Activated T-helper 1 cell treated with anti-CD3 and anti-CD28 coated beads, Interleukin-12 subunit alpha, Interleukin-12 subunit beta, Interleukin-2, Interleukin-4 antibody, amounts not matched to agents 30 ng/mL and 10 ng/mL and 1 ng/mL, durations not matched to agents 14 hours and 24 hours and 36 hours (primary cell): ENCODE measurements at regions of chr11 and their contacts with region 1.

Region 1: DNA sequence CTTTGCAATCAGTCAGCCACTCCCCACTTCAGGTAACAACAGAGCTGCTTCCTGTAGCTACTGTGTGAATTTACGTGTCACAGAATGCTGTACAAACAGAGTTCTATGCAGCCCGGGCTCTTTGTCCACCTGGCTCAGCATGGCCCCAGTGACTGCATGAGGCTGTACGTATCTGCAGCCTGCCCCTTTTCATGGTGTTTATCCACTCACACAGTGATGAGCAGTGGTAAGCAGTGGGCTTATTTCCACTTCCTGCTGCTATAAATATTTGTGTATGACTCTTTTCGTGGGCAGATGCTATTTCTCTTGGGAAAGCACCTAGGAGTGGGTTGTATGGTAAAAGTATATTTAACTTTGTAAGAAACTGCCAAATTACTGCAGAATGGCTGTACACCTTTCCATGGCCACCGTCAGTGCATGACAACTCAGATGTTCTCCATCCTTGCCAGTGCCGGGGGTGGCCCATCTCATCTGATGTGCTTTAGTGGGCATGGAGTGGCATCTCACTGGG is 43.3 kb downstream of the MYEOV start:
- DNase-seq: peak; percentile 26
- H3K4me3 Mint-ChIP-seq: peak overlapping the region; percentile 35
- H3K27ac Mint-ChIP-seq: peak overlapping the region; percentile 89
- H3K4me1 Mint-ChIP-seq: peaks cover 56% of the 10 kb centered on the region
- H3K27me3 Mint-ChIP-seq: peaks cover 4% of the 10 kb centered on the region

Region 2: GRCh38 chr11:69122642-69123431 is 214.4 kb before region 1 on chr11:
- intact Hi-C with region 1: loop called (anchors 1 kb)
- DNase-seq: peak; percentile 40
- H3K4me3 Mint-ChIP-seq: peak overlapping the region; percentile 59
- H3K27ac Mint-ChIP-seq: peak overlapping the region; percentile 5
- H3K4me1 Mint-ChIP-seq: peaks cover 36% of the 10 kb centered on the region
- H3K27me3 Mint-ChIP-seq: peaks cover 2% of the 10 kb centered on the region

Region 3: GRCh38 chr11:69296890-69297786 is 40.1 kb before region 1 on chr11:
- intact Hi-C with region 1: loop called (anchors 1 kb)
- DNase-seq: peak; percentile 77
- H3K4me3 Mint-ChIP-seq: peak overlapping the region; percentile 82
- H3K27ac Mint-ChIP-seq: peak overlapping the region; percentile 97
- H3K4me1 Mint-ChIP-seq: peaks cover 64% of the 10 kb centered on the region
- H3K27me3 Mint-ChIP-seq: peaks cover 6% of the 10 kb centered on the region

Region 4: GRCh38 chr11:69352715-69353325 is 15.6 kb after region 1 on chr11:
- intact Hi-C with region 1: loop called (anchors 1 kb)
- DNase-seq: no peak
- H3K4me3 Mint-ChIP-seq: no peak overlapping the region
- H3K27ac Mint-ChIP-seq: peak overlapping the region; percentile 43
- H3K4me1 Mint-ChIP-seq: peaks cover 10% of the 10 kb centered on the region
- H3K27me3 Mint-ChIP-seq: peaks cover 1% of the 10 kb centered on the region

Region 5: DNA sequence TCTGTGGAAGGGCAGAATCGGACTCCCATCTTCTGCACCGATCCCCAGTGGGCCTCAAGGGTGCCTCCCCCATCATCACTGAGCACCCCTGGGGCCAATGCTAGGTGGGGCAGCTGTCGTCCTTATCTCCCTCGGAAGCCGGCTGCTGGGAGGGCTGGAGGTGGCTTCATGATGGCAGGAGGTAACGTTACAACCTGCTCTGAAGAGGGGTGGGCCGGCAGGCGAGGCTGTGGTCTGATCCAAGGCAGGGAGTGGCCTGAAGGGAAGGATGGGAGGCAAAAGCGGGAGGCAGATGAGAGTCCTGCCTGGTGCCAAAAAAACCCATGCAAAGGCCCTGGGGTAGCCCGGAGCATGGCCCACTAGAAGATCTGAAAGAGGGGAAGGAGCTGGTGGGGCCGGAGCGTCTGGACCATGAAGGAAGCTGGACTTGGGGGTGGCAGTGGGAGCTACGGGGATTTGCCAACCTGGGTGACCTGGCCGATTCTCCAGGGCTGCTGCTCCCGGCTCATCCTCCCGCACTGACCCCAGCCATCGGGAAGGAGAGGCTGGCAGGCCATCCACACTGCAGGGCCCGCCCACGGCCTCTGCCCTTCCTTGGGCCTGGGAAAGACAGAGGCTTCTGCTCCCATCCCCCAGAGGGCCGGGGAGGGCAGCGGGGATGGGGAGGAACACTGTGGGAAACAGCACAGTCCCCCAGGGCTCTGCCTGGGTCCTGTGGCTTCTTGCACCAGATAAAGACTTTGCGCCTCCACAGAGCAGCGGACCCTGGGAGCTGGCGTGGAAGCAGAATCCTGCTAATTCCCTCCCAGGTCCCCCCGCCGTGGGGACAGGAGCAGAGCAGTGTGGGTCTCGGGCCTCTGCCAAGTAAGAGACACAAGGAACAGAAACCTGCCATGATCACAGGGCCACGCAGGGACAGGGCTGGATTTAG is 57.0 kb after region 1 on chr11:
- intact Hi-C with region 1: no loop called
- DNase-seq: no peak
- H3K4me3 Mint-ChIP-seq: no peak overlapping the region
- H3K27ac Mint-ChIP-seq: no peak overlapping the region
- H3K4me1 Mint-ChIP-seq: no peaks in the 10 kb centered on the region
- H3K27me3 Mint-ChIP-seq: no peaks in the 10 kb centered on the region

Region 6: DNA sequence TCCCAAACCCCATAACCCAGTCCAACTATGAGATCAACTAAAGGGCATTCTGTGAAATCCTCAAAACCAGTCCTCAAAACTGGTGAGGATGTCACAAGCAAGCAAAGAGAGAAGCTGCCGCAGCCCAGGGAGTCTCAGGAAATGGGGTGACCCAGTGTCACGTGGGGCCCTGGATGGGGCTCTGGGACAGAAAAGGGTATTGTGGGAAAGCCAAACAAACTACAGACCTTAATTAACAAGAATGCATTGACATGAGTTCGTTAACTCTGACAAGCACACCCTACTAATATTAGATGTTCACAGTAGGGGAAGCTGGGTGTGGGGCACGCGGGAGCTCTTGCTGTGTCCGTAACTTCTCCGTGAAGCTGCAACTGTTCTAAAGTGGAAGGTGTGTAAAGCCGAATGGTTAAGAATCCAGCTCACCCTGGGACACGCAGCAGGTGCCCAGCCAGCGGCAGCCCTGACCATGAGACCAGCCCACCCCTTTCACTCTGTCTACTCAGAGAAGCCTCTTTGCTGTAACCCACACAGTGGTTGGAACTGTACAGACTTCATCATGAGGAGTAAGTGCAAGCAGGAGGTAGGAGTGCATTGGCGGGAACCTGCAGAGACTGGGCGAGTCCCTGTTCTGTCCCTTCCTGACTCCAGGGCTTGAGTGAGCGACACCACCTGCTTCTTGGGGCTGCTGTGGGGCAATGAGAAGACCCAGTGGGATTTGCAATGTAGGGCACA is 162.1 kb after region 1 on chr11:
- intact Hi-C with region 1: no loop called
- DNase-seq: no peak
- H3K4me3 Mint-ChIP-seq: no peak overlapping the region
- H3K27ac Mint-ChIP-seq: no peak overlapping the region
- H3K4me1 Mint-ChIP-seq: peaks cover 5% of the 10 kb centered on the region
- H3K27me3 Mint-ChIP-seq: peaks cover 2% of the 10 kb centered on the region

Region 7: GRCh38 chr11:69554894-69555293 is 217.6 kb after region 1 on chr11:
- intact Hi-C with region 1: loop called (anchors 1 kb)
- DNase-seq: no peak
- H3K4me3 Mint-ChIP-seq: no peak overlapping the region
- H3K27ac Mint-ChIP-seq: no peak overlapping the region
- H3K4me1 Mint-ChIP-seq: peaks cover 18% of the 10 kb centered on the region
- H3K27me3 Mint-ChIP-seq: peaks cover 6% of the 10 kb centered on the region